GM13977 (cell line): ENCODE measurements at regions of chr7 and their contacts with region 1.

Region 1: DNA sequence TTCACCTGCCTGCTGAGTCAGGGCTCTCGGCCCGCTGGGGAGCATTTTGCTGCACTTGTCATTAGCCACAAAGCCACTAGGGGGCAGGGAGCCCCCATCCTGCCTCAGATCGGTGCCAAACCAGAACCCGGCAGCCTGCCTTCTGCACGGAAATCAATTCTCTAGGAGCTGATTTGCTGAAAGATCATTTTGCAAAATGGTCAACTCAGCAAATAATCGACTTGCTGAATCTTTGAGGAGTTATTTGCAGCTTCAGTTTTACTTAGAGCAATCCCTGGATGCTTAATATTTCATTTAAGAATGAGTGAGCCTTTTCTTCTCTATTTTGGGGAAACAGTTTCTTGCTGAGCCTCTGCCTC is 1.7 kb upstream of the GIMAP8 start:
- DNase-seq: peak; percentile 87
- CTCF ChIP-seq: peak; percentile 94

Region 2: GRCh38 chr7:150737265-150738055 is 288.7 kb after region 1 on chr7 and contains the start of gene GIMAP5:
- in situ Hi-C with region 1: loop called (anchors 10 kb)
- DNase-seq: no peak
- CTCF ChIP-seq: no peak

Region 3: GRCh38 chr7:150753826-150754603 is 305.2 kb after region 1 on chr7:
- in situ Hi-C with region 1: loop called (anchors 10 kb)
- DNase-seq: peak; percentile 52
- CTCF ChIP-seq: peak; percentile 42